ENCODE measurements at regions of chr4 and their contacts with region 1.

Region 1: DNA sequence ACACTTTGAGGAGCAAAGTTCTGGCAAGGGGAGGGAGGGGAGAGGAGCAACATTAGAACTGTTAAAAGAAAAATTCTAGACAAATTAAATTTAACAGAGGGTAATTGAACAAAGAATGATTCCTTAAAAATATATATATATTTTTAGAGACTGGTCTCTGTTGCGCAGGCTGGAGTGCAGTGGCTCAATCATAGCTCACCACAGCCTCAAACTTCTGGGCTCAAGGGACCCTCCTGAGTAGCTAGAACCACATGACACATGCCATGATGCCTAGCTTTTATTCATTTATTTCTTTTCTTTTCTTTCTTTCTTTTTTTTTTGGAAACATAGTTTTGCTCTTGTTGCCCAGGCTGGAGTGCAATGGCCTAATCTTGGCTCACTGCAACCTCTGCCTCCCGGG is 19.1 kb upstream of the SPINK2 start:
- DNase-seq: no peak
- ATAC-seq: no peak
- H3K4me3 ChIP-seq: no peak overlapping the region
- H3K27ac ChIP-seq: no peak overlapping the region
- H3K4me1 ChIP-seq: no peaks in the 10 kb centered on the region
- H3K27me3 ChIP-seq: no peaks in the 10 kb centered on the region
- CTCF ChIP-seq: no peak
- POLR2A ChIP-seq: no peak
- RAD21 ChIP-seq: no peak

Region 2: GRCh38 chr4:56424697-56425514 is 415.7 kb before region 1 on chr4:
- CTCF ChIA-PET with region 1: interaction called, 3 read pairs
- POLR2A ChIA-PET with region 1: no interaction called
- dilution Hi-C with region 1: no loop called
- in situ Hi-C with region 1: loop called (anchors 25 kb)
- intact Hi-C with region 1: loop called (anchors 1 kb)
- DNase-seq: peak; percentile 45
- ATAC-seq: peak; percentile 67
- H3K4me3 ChIP-seq: no peak overlapping the region
- H3K27ac ChIP-seq: no peak overlapping the region
- H3K4me1 ChIP-seq: no peaks in the 10 kb centered on the region
- H3K27me3 ChIP-seq: no peaks in the 10 kb centered on the region
- CTCF ChIP-seq: peak; percentile 65
- POLR2A ChIP-seq: no peak
- RAD21 ChIP-seq: peak; percentile 53

Region 3: GRCh38 chr4:56505269-56506130 is 335.1 kb before region 1 on chr4 and contains the start of gene ARL9:
- CTCF ChIA-PET with region 1: no interaction called
- POLR2A ChIA-PET with region 1: no interaction called
- dilution Hi-C with region 1: no loop called
- in situ Hi-C with region 1: no loop called
- intact Hi-C with region 1: loop called (anchors 1 kb)
- DNase-seq: peak; percentile 40
- ATAC-seq: peak; percentile 78
- H3K4me3 ChIP-seq: peak within 1 kb of the TSS; percentile 57
- H3K27ac ChIP-seq: no peak within 1 kb of the TSS
- H3K4me1 ChIP-seq: peaks cover 3% of the 10 kb centered on the region; the same call in 1 of the 2 replicates
- H3K27me3 ChIP-seq: no peaks in the 10 kb centered on the region
- CTCF ChIP-seq: no peak
- POLR2A ChIP-seq: no peak
- RAD21 ChIP-seq: no peak
- total RNA-seq, gene ARL9: 0.18 and 0.28 TPM in 2 replicates

Region 4: GRCh38 chr4:56575820-56576429 is 264.6 kb before region 1 on chr4:
- CTCF ChIA-PET with region 1: interaction called, 10 read pairs
- POLR2A ChIA-PET with region 1: no interaction called
- dilution Hi-C with region 1: no loop called
- in situ Hi-C with region 1: no loop called
- intact Hi-C with region 1: loop called (anchors 1 kb)
- DNase-seq: peak; percentile 63
- ATAC-seq: peak; percentile 94
- H3K4me3 ChIP-seq: no peak overlapping the region
- H3K27ac ChIP-seq: no peak overlapping the region
- H3K4me1 ChIP-seq: no peaks in the 10 kb centered on the region
- H3K27me3 ChIP-seq: no peaks in the 10 kb centered on the region
- CTCF ChIP-seq: peak; percentile 67
- POLR2A ChIP-seq: no peak
- RAD21 ChIP-seq: peak; percentile 73

Measured in IMR-90 (cell line).